GM18951 (cell line): ENCODE measurements at regions of chr17 and their contacts with region 1.

Region 1: GRCh38 chr17:43393944-43394482 is 4.8 kb upstream of the ARL4D start:
- POLR2A ChIP-seq: no peak

Region 2: DNA sequence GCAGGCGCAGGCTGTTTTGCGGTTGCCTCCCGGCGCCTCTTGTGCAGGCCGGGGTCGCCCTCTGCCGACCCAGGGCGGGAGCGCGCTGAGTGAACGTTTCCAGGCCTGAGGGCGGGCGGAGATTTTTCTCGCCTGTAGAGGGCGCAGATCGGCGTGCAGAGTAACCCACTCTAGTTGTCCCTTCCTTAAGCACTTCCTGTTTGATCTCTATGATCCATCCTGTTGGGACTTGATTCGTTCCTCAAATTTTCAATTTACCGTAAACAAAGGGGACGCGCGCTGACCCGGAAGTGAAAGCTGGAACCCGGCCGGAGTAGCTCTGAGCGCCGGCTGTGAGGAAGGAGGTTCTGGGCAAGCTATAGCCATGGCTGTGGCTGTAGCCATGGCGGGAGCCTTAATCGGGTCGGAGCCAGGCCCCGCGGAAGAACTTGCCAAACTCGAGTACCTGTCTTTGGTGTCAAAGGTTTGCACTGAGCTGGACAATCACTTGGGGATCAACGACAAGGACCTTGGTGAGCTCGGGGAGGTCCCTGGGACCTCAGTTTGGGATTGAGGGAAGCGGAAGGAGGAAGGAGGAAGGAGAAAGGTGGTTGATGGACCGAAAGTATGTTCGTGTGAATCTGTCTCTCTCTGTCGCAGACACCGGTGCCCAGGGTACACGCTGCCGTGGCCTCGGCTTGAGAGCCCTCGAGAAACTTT is 89.8 kb after region 1 on chr17 and contains the start of gene DHX8:
- in situ Hi-C with region 1: loop called (anchors 5 kb)
- POLR2A ChIP-seq: peak; percentile 90